AG04450 (cell line): ENCODE measurements at regions of chr5 and their contacts with region 1.

Region 1: DNA sequence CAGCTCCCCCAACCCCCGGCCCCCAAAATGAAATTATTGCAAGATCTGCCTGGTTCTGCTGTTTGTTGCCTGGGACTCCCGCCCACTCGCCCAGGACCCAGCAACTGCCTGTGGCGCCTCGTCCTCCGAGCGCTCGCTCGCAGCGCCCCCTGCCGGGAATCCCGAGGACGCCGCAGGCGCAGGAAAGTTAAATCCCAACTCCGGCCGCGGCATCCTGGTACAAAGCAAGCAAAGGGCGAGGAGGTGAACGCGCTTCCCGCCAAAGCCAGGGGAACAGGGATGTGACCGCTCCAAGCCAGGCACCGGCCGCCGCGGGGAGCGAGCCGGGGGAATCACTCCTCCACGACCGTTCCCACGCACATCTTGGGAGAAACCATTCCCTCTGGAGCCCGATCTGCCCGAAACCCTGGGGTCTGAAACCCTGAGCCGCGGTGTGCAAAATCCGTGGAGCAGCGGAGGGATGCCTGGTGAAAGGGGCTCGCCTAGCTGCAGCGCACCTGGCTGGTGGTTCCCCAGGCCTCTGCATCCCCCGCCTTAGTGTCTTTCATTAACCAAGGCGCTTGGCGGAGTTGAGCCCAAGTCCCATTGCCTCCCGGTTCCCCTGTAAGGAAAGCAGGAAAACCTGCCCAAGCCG is 1.3 kb downstream of the SEMA5A start:
- DNase-seq: peak; percentile 53
- H3K4me3 ChIP-seq: peak overlapping the region; percentile 82
- H3K27ac ChIP-seq: no peak overlapping the region
- H3K27me3 ChIP-seq: no peaks in the 10 kb centered on the region
- CTCF ChIP-seq: peak; percentile 92

Region 2: GRCh38 chr5:9156282-9156681 is 388.3 kb before region 1 on chr5:
- CTCF ChIA-PET with region 1: interaction called, 15 read pairs
- POLR2A ChIA-PET with region 1: no interaction called
- DNase-seq: peak; percentile 30
- H3K4me3 ChIP-seq: no peak overlapping the region
- H3K27ac ChIP-seq: no peak overlapping the region
- H3K27me3 ChIP-seq: no peaks in the 10 kb centered on the region
- CTCF ChIP-seq: peak; percentile 52

Region 3: DNA sequence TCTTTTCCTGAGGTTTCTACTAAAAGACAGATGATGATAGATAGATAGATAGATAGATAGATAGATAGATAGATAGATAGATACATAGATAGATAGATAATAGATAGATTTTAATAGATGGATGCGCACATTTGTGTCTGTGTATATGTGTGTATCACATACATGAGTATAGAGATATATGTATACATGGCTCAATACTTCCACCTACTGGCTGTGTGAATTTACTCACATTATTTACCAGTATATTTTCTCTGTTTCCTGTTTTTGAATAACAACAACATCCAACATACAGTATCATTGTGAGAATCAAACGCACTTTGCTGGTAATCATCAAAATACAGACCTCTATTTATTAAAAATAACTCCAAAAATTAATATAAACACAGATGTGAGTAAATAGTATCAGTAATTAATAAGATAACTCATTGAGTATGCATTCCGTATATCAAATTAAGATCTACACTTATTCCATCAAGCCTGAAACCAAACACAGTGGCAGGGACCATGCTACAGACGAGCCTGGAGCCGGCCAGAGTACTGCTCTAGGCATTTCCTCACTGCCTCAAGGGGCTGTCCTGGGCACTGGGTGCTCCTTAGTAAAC is 336.7 kb before region 1 on chr5:
- CTCF ChIA-PET with region 1: interaction called, 16 read pairs
- POLR2A ChIA-PET with region 1: no interaction called
- DNase-seq: no peak
- H3K4me3 ChIP-seq: no peak overlapping the region
- H3K27ac ChIP-seq: no peak overlapping the region
- H3K27me3 ChIP-seq: no peaks in the 10 kb centered on the region
- CTCF ChIP-seq: peak; percentile 58

Region 4: DNA sequence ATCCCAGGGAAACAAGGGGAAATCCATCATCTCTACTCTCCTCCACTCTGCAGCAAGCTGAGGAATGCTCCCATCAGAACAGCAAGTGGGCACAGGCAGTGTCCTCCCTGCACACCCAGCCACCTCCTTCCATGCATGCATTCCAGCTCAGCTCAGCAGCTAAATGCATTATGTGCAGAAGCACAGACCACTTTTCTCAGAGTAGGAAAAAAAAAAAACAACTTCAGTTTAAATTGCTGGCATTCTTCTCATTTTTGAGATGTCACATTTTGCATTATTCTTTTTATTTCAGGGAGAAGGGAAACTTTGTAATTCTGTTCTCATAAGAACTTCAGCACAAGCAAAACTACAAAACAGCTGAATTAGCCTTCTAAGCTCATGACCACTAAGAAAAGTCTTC is 310.9 kb before region 1 on chr5:
- CTCF ChIA-PET with region 1: interaction called, 10 read pairs
- POLR2A ChIA-PET with region 1: no interaction called
- DNase-seq: no peak
- H3K4me3 ChIP-seq: no peak overlapping the region
- H3K27ac ChIP-seq: no peak overlapping the region
- H3K27me3 ChIP-seq: no peaks in the 10 kb centered on the region
- CTCF ChIP-seq: no peak

Region 5: DNA sequence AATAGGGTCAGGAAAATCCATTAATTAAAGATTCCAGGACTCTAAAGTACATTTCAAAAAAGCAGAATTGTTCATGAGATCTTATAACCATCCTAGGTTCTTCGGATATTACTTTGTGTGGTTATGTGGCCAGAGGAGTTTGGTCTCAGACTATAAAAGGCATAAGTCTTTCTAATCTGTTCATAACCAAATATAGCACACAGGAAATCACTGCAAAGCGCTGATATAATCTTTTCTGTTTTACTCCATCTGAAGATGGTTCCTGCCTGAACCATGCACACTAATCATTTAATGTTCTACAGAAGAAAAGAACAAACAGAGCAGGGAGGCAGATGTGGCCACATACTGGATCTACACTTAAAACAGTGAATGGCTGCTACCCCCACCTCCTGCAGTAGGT is 181.6 kb before region 1 on chr5:
- CTCF ChIA-PET with region 1: interaction called, 10 read pairs
- POLR2A ChIA-PET with region 1: no interaction called
- DNase-seq: no peak
- H3K4me3 ChIP-seq: no peak overlapping the region
- H3K27ac ChIP-seq: no peak overlapping the region
- H3K27me3 ChIP-seq: no peaks in the 10 kb centered on the region
- CTCF ChIP-seq: no peak

Region 6: GRCh38 chr5:9562141-9562540 is 17.5 kb after region 1 on chr5:
- CTCF ChIA-PET with region 1: no interaction called
- POLR2A ChIA-PET with region 1: no interaction called
- DNase-seq: no peak
- H3K4me3 ChIP-seq: no peak overlapping the region
- H3K27ac ChIP-seq: no peak overlapping the region
- H3K27me3 ChIP-seq: no peaks in the 10 kb centered on the region
- CTCF ChIP-seq: no peak

Region 7: GRCh38 chr5:9615331-9615730 is 70.7 kb after region 1 on chr5:
- CTCF ChIA-PET with region 1: no interaction called
- POLR2A ChIA-PET with region 1: no interaction called
- DNase-seq: no peak
- H3K4me3 ChIP-seq: no peak overlapping the region
- H3K27ac ChIP-seq: no peak overlapping the region
- H3K27me3 ChIP-seq: no peaks in the 10 kb centered on the region
- CTCF ChIP-seq: no peak

Region 8: DNA sequence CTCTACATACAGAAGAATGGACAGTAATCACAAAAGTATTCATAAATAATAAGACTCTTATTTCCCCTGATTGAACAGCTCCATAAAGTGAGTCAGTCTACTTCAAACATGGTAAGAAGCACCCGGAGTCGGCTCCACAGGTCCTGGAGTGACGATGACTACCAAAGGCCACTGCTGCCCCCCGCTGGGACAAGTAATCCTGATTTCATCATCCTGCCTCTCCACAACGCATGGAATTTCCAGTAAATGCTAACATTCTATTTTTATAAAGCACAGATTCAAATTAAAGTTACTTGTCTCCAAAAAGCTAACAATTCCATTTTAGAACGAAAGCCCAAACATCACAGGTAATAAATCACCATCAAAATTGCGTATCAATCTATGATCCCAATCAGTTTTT is 688.9 kb after region 1 on chr5:
- CTCF ChIA-PET with region 1: interaction called, 13 read pairs
- POLR2A ChIA-PET with region 1: no interaction called
- DNase-seq: peak; percentile 84
- H3K4me3 ChIP-seq: no peak overlapping the region
- H3K27ac ChIP-seq: peak overlapping the region; percentile 39
- H3K27me3 ChIP-seq: no peaks in the 10 kb centered on the region
- CTCF ChIP-seq: peak; percentile 48